MCF 10A (cell line): ENCODE measurements at regions of chr1 and their contacts with region 1.

Region 1: DNA sequence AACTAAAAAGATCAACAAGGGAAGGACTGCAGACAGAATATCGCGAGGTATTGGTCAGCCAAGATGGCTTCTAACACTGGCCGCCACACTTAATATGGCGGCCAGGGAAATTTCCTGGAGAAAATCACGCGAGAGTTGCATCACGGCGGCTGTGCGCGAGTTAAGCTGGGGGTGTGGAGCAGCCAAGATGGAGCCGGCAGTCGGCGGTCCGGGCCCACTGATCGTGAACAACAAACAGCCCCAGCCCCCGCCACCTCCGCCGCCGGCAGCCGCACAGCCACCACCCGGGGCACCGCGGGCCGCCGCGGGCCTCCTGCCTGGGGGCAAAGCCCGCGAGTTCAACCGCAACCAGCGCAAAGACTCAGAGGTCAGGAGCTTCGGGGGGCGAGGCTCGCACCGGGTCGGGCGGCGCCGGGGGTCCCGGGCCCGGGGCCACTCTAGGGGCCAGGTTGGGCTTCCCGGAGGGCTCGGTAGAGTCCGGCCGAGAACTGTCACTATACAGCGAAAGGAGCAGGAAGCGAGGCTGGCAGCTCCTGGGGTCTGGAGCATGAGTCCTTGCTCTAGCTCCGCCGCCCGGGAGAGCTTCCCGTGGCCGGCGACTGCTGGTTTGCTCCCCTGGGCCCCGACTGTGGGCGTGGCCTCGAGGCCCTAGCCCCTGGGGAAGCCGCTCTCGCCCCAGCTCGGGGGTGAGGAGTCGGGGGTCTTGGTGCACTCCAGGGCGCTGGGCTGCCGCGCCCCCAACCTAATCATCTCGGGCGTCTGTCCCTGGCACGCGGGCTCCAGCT is at the start of gene STRIP1:
- DNase-seq: peak; percentile 96
- H3K4me3 Mint-ChIP-seq: peak within 1 kb of the TSS; percentile 97
- H3K27ac Mint-ChIP-seq: peak within 1 kb of the TSS; percentile 94
- H3K4me1 Mint-ChIP-seq: peaks cover 18% of the 10 kb centered on the region
- H3K27me3 Mint-ChIP-seq: no peaks in the 10 kb centered on the region
- CTCF ChIP-seq: no peak
- total RNA-seq, gene STRIP1: 35.6 and 40.6 TPM in 2 replicates

Region 2: DNA sequence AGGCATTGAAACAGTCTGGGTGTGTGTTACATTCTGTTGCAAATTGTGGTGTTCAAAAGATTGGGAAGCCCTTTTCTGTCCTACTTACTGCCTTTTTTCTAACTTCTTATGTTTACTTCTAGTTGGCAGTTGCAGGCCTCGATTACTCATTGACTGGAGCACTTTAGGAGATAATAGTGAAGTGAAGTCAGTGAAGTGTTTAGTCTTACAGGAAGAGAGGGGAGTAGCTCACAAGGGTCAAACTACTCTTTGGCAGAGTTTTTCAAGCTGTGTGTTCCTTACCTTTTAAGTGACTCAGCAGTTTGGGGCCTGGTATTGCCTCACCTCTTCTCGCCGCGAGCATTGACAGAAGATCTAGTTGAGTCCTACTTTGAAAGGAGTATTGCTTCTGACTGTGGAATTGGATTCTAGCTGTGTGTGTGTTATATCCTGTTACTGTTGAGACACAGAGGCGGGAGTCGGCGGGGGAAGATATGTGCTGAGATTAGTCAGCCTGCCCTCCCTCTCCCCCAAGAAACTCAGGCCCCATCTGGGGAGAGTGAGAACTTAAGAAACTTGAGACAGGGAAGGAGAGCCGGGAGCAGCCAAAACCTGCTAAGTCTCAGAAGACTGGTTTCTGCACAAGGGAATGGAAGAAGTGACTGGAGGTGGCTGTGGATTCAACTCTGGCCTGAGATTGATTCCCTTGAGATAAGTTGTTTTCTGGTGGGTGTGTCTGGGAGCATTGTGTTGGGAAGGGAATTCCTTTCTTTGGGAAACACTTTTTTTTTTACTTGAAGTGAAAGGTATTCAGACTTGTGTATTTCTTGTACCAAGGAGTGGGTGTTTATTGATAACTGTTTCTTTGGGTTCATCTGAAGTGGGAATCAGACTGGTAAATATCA is 30.7 kb before region 1 on chr1:
- CTCF ChIA-PET with region 1: interaction called, 87 read pairs
- POLR2A ChIA-PET with region 1: interaction called, 10 read pairs
- intact Hi-C with region 1: no loop called
- DNase-seq: peak; percentile 99
- H3K4me3 Mint-ChIP-seq: peak overlapping the region; percentile 70
- H3K27ac Mint-ChIP-seq: peak overlapping the region; percentile 88
- H3K4me1 Mint-ChIP-seq: peaks cover 53% of the 10 kb centered on the region
- H3K27me3 Mint-ChIP-seq: no peaks in the 10 kb centered on the region
- CTCF ChIP-seq: no peak

Region 3: GRCh38 chr1:110011527-110012041 is 23.1 kb before region 1 on chr1:
- CTCF ChIA-PET with region 1: interaction called, 87 read pairs
- POLR2A ChIA-PET with region 1: interaction called, 3 read pairs
- intact Hi-C with region 1: no loop called
- DNase-seq: peak; percentile 73
- H3K4me3 Mint-ChIP-seq: no peak overlapping the region
- H3K27ac Mint-ChIP-seq: peak overlapping the region; percentile 39
- H3K4me1 Mint-ChIP-seq: peaks cover 13% of the 10 kb centered on the region
- H3K27me3 Mint-ChIP-seq: no peaks in the 10 kb centered on the region
- CTCF ChIP-seq: peak; percentile 46

Region 4: GRCh38 chr1:110053557-110054428 is 19.1 kb after region 1 on chr1:
- CTCF ChIA-PET with region 1: interaction called, 120 read pairs
- POLR2A ChIA-PET with region 1: interaction called, 5 read pairs
- intact Hi-C with region 1: no loop called
- DNase-seq: peak; percentile 57
- H3K4me3 Mint-ChIP-seq: no peak overlapping the region
- H3K27ac Mint-ChIP-seq: peak overlapping the region; percentile 12
- H3K4me1 Mint-ChIP-seq: peaks cover 2% of the 10 kb centered on the region
- H3K27me3 Mint-ChIP-seq: no peaks in the 10 kb centered on the region
- CTCF ChIP-seq: peak; percentile 87